ENCODE measurements at regions of chr12 and their contacts with region 1.

Region 1: DNA sequence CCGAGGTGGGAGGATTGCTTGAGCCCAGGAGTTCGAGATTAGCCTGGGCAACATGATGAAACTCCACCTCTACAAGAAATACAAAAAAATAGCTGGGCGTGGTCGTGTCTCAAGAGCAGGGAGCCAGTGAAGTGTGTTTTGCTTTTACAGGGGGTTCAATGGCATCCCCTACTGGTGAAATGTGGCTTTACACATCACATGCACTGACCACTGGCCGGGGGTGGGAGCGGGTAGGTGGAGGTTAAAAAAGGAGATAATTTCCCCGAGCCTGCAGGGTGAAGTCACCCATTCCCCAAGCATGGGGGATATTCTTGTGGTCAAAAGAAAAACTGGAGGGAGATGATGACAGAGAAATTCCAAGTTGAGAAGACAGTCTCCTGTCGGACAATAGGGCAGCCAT is 63.6 kb upstream of the PWP1 start:
- DNase-seq: no peak
- H3K4me3 ChIP-seq: no peak overlapping the region
- H3K27ac ChIP-seq: no peak overlapping the region
- H3K4me1 ChIP-seq: no peaks in the 10 kb centered on the region
- H3K27me3 ChIP-seq: no peaks in the 10 kb centered on the region
- CTCF ChIP-seq: peak; percentile 38 to 65

Region 2: GRCh38 chr12:107492393-107493134 is 129.4 kb before region 1 on chr12:
- CTCF ChIA-PET with region 1: no interaction called
- dilution Hi-C with region 1: no loop called
- in situ Hi-C with region 1: no loop called
- intact Hi-C with region 1: no loop called
- DNase-seq: no peak
- H3K4me3 ChIP-seq: no peak overlapping the region
- H3K27ac ChIP-seq: no peak overlapping the region
- H3K4me1 ChIP-seq: no peaks in the 10 kb centered on the region
- H3K27me3 ChIP-seq: no peaks in the 10 kb centered on the region
- CTCF ChIP-seq: no peak

Region 3: GRCh38 chr12:107522692-107523477 is 99.1 kb before region 1 on chr12:
- CTCF ChIA-PET with region 1: no interaction called
- dilution Hi-C with region 1: loop called (anchors 5 kb)
- in situ Hi-C with region 1: no loop called
- intact Hi-C with region 1: no loop called
- DNase-seq: no peak
- H3K4me3 ChIP-seq: no peak overlapping the region
- H3K27ac ChIP-seq: no peak overlapping the region
- H3K4me1 ChIP-seq: peaks cover 4% of the 10 kb centered on the region
- H3K27me3 ChIP-seq: no peaks in the 10 kb centered on the region
- CTCF ChIP-seq: peak in 1 of 2 donors; percentile 25

Region 4: GRCh38 chr12:107607464-107608392 is 14.3 kb before region 1 on chr12:
- CTCF ChIA-PET with region 1: no interaction called
- dilution Hi-C with region 1: no loop called
- in situ Hi-C with region 1: no loop called
- intact Hi-C with region 1: no loop called
- DNase-seq: peak; percentile 55
- H3K4me3 ChIP-seq: no peak overlapping the region
- H3K27ac ChIP-seq: no peak overlapping the region
- H3K4me1 ChIP-seq: peaks cover 3% of the 10 kb centered on the region
- H3K27me3 ChIP-seq: no peaks in the 10 kb centered on the region
- CTCF ChIP-seq: peak; percentile 95 to 96

Region 5: DNA sequence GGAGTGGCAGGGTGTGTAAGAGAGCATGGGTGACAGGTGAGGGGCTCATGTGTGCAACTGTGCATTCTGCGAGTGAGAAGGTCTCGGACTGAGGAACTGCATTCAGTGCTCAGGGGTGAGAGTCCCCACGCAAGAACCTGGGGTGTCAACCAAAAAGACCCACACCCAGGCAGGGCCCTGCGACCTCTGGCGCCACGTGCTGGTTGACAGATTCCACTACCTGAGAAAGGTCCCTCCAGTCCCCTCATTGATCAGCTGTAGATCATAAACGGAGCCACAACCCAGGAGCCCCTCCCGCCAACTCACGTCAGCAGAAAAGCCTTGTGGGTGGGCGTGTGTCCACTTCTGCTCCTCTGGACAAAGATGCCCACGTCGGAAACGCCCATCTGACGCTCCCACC is 251.2 kb after region 1 on chr12:
- CTCF ChIA-PET with region 1: interaction called, 11 read pairs
- dilution Hi-C with region 1: no loop called
- in situ Hi-C with region 1: no loop called
- intact Hi-C with region 1: no loop called
- DNase-seq: no peak
- H3K4me3 ChIP-seq: no peak overlapping the region
- H3K27ac ChIP-seq: no peak overlapping the region
- H3K4me1 ChIP-seq: no peaks in the 10 kb centered on the region
- H3K27me3 ChIP-seq: no peaks in the 10 kb centered on the region
- CTCF ChIP-seq: no peak

Measured in mammary epithelial cell (primary cell).